Posterior vena cava (tissue), 2 donors: ENCODE measurements at regions of chr6 and their contacts with region 1.

Region 1: DNA sequence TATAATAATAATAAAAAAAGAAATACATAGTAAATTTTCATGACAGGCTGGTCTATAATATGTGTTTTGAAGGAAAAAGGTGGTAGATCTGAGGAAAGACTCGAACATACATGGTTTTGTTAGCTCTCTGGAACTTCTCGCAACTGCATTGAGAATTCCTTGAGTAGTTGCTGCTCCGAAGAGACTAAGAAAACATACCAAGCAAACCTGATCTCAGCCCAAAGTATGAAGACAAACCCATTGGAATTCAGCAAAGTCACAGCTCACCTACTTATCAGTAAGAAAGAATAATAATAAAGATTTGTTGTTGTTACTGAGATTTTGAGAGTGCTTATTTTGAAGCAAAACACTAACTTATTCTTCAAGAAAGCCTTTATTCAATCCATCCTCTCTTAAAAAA is 1107.1 kb upstream of the EYS start:
- DNase-seq: no peak

Region 2: DNA sequence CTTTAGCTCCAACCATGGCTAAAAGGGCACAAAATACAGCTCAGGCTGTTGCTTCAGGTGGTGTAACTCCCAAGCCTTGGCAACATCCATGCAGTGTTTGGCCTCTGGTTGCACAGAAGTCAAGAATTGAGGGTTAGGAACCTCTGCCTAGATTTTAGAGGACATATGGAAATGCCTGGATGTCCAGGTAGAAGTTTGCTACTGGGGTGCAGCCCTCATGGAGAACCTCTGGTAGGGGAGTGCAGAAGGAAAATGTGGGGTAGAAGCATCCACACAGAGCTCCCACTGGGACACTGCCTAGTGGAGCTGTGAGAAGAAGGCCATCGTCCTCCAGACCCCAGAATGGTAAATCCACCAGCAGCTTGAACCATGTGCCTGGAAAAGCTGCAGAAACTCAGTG is 346.7 kb after region 1 on chr6:
- intact Hi-C with region 1: loop called in 1 of 2 experiments (anchors 5 kb)
- DNase-seq: no peak